ENCODE measurements at regions of chr12 and their contacts with region 1.

Region 1: GRCh38 chr12:17642340-17642650 is 447.7 kb downstream of the RERGL start:
- DNase-seq: no peak
- H3K4me3 Mint-ChIP-seq: no peak overlapping the region
- H3K27ac Mint-ChIP-seq: no peak overlapping the region
- H3K4me1 Mint-ChIP-seq: peaks cover 4% of the 10 kb centered on the region
- H3K27me3 Mint-ChIP-seq: no peaks in the 10 kb centered on the region

Region 2: GRCh38 chr12:15955281-15955680 is 1687.0 kb before region 1 on chr12:
- CTCF ChIA-PET with region 1: no interaction called
- intact Hi-C with region 1: no loop called
- DNase-seq: no peak
- H3K4me3 Mint-ChIP-seq: no peak overlapping the region
- H3K27ac Mint-ChIP-seq: no peak overlapping the region
- H3K4me1 Mint-ChIP-seq: no peaks in the 10 kb centered on the region
- H3K27me3 Mint-ChIP-seq: no peaks in the 10 kb centered on the region

Region 3: GRCh38 chr12:16076553-16076952 is 1565.7 kb before region 1 on chr12:
- CTCF ChIA-PET with region 1: no interaction called
- intact Hi-C with region 1: loop called (anchors 10 kb)
- DNase-seq: no peak
- H3K4me3 Mint-ChIP-seq: no peak overlapping the region
- H3K27ac Mint-ChIP-seq: no peak overlapping the region
- H3K4me1 Mint-ChIP-seq: no peaks in the 10 kb centered on the region
- H3K27me3 Mint-ChIP-seq: no peaks in the 10 kb centered on the region

Region 4: GRCh38 chr12:16939871-16940306 is 702.4 kb before region 1 on chr12:
- CTCF ChIA-PET with region 1: no interaction called
- intact Hi-C with region 1: loop called (anchors 5 kb)
- DNase-seq: peak; percentile 10
- H3K4me3 Mint-ChIP-seq: no peak overlapping the region
- H3K27ac Mint-ChIP-seq: no peak overlapping the region
- H3K4me1 Mint-ChIP-seq: no peaks in the 10 kb centered on the region
- H3K27me3 Mint-ChIP-seq: no peaks in the 10 kb centered on the region

Measured in activated naive CD4-positive, alpha-beta T cell treated with anti-CD3 and anti-CD28 coated beads for 36 hours (primary cell).